Prostate gland (tissue), 2 donors: ENCODE measurements at regions of chr6 and their contacts with region 1.

Region 1: GRCh38 chr6:10800829-10801535 is 37.4 kb downstream of the MAK start:
- DNase-seq: peak; percentile 48
- H3K4me3 ChIP-seq: no peak overlapping the region
- H3K27ac ChIP-seq: no peak overlapping the region
- H3K4me1 ChIP-seq: no peaks in the 10 kb centered on the region
- H3K27me3 ChIP-seq: no peaks in the 10 kb centered on the region
- CTCF ChIP-seq: peak; percentile 86 to 95 (median 89)
- POLR2A ChIP-seq: no peak

Region 2: GRCh38 chr6:9957215-9957759 is 843.7 kb before region 1 on chr6:
- intact Hi-C with region 1: no loop called
- DNase-seq: no peak
- H3K4me3 ChIP-seq: no peak overlapping the region
- H3K27ac ChIP-seq: no peak overlapping the region
- H3K4me1 ChIP-seq: no peaks in the 10 kb centered on the region
- H3K27me3 ChIP-seq: no peaks in the 10 kb centered on the region
- CTCF ChIP-seq: no peak
- POLR2A ChIP-seq: no peak

Region 3: GRCh38 chr6:10478187-10479040 is 322.6 kb before region 1 on chr6:
- intact Hi-C with region 1: loop called (anchors 10 kb)
- DNase-seq: no peak
- H3K4me3 ChIP-seq: no peak overlapping the region
- H3K27ac ChIP-seq: no peak overlapping the region
- H3K4me1 ChIP-seq: no peaks in the 10 kb centered on the region
- H3K27me3 ChIP-seq: no peaks in the 10 kb centered on the region
- CTCF ChIP-seq: peak; percentile 12 to 63 (median 59)
- POLR2A ChIP-seq: no peak

Region 4: DNA sequence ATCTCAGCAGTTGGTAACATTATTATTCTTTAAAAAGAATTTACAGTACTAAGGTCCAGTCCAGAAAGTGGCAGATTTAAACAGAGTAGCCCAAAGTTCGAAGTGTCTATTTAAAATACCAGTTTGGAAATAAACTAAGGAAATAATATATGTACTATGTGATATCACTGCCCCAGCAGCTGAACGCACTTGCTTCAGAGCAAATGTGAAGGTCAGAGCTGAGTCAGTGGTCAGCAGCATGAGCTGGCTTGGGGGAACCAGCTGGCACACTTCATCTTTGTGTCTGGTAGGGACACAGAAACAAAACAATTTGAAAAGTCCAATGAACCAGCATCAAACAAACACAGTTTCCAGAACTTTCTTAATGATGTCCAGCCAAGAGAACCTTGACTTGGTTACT is 38.0 kb before region 1 on chr6:
- intact Hi-C with region 1: no loop called
- DNase-seq: no peak
- H3K4me3 ChIP-seq: no peak overlapping the region
- H3K27ac ChIP-seq: no peak overlapping the region
- H3K4me1 ChIP-seq: no peaks in the 10 kb centered on the region
- H3K27me3 ChIP-seq: no peaks in the 10 kb centered on the region
- CTCF ChIP-seq: no peak
- POLR2A ChIP-seq: no peak

Region 5: GRCh38 chr6:11350294-11350969 is 549.5 kb after region 1 on chr6:
- intact Hi-C with region 1: no loop called
- DNase-seq: no peak
- H3K4me3 ChIP-seq: no peak overlapping the region
- H3K27ac ChIP-seq: no peak overlapping the region
- H3K4me1 ChIP-seq: no peaks in the 10 kb centered on the region
- H3K27me3 ChIP-seq: no peaks in the 10 kb centered on the region
- CTCF ChIP-seq: no peak
- POLR2A ChIP-seq: no peak